ENCODE measurements at regions of chr6 and their contacts with region 1.

Region 1: GRCh38 chr6:115896538-115897129 is 164.1 kb downstream of the FRK start:
- DNase-seq: no peak
- H3K4me3 ChIP-seq: no peak overlapping the region
- H3K27ac ChIP-seq: no peak overlapping the region
- H3K4me1 ChIP-seq: no peaks in the 10 kb centered on the region
- H3K27me3 ChIP-seq: no peaks in the 10 kb centered on the region
- CTCF ChIP-seq: peak; percentile 28 to 75 (median 62)

Region 2: GRCh38 chr6:114747987-114748630 is 1148.5 kb before region 1 on chr6:
- intact Hi-C with region 1: loop called (anchors 10 kb)
- DNase-seq: no peak
- H3K4me3 ChIP-seq: no peak overlapping the region
- H3K27ac ChIP-seq: no peak overlapping the region
- H3K4me1 ChIP-seq: no peaks in the 10 kb centered on the region
- H3K27me3 ChIP-seq: no peaks in the 10 kb centered on the region
- CTCF ChIP-seq: peak in 2 of 3 experiments; percentile 50 to 56

Region 3: GRCh38 chr6:116010790-116011401 is 114.3 kb after region 1 on chr6:
- intact Hi-C with region 1: no loop called
- DNase-seq: peak in 1 of 2 donors; percentile 84
- H3K4me3 ChIP-seq: peak overlapping the region; percentile 6 to 9
- H3K27ac ChIP-seq: no peak overlapping the region
- H3K4me1 ChIP-seq: peaks cover 3 to 40% of the 10 kb centered on the region in 2 donors
- H3K27me3 ChIP-seq: no peaks in the 10 kb centered on the region
- CTCF ChIP-seq: peak; percentile 63 to 85 (median 80)

Measured in ascending aorta (tissue), 2 donors.